T-cell (primary cell): ENCODE measurements at regions of chr16 and their contacts with region 1.

Region 1: GRCh38 chr16:81505011-81505661 is 60.5 kb downstream of the CMIP start:
- DNase-seq: no peak
- ATAC-seq: no peak
- H3K4me3 ChIP-seq: no peak overlapping the region
- H3K4me3 Mint-ChIP-seq: no peak overlapping the region
- H3K27ac ChIP-seq: peak overlapping the region; percentile 24
- H3K27ac Mint-ChIP-seq: peak overlapping the region in 1 of 2 donors; percentile 55
- H3K4me1 ChIP-seq: peaks cover 4 to 17% of the 10 kb centered on the region in 2 experiments
- H3K4me1 Mint-ChIP-seq: peaks cover 33 to 46% (median 42%) of the 10 kb centered on the region in 3 donors
- H3K27me3 ChIP-seq: no peaks in the 10 kb centered on the region
- H3K27me3 Mint-ChIP-seq: no peaks in the 10 kb centered on the region

Region 2: GRCh38 chr16:81493755-81494433 is 11.2 kb before region 1 on chr16:
- CTCF ChIA-PET with region 1: no interaction called
- POLR2A ChIA-PET with region 1: interaction called in 1 of 2 experiments, 10 read pairs
- DNase-seq: peak in 3 of 35 experiments; percentile 30 to 43 (median 40)
- ATAC-seq: peak in 3 of 4 experiments; percentile 20 to 83 (median 62)
- H3K4me3 ChIP-seq: no peak overlapping the region
- H3K4me3 Mint-ChIP-seq: no peak overlapping the region
- H3K27ac ChIP-seq: no peak overlapping the region
- H3K27ac Mint-ChIP-seq: peak overlapping the region in 1 of 2 donors; percentile 45
- H3K4me1 ChIP-seq: peaks cover 0 to 39% of the 10 kb centered on the region in 2 experiments
- H3K4me1 Mint-ChIP-seq: peaks cover 53 to 58% (median 55%) of the 10 kb centered on the region in 3 donors
- H3K27me3 ChIP-seq: no peaks in the 10 kb centered on the region
- H3K27me3 Mint-ChIP-seq: no peaks in the 10 kb centered on the region